HEK293 (cell line): ENCODE measurements at regions of chr6 and their contacts with region 1.

Region 1: GRCh38 chr6:137944793-137945498 is 77.9 kb downstream of the TNFAIP3 start:
- H3K4me3 ChIP-seq: no peak overlapping the region
- H3K27ac ChIP-seq: no peak overlapping the region
- H3K4me1 ChIP-seq: no peaks in the 10 kb centered on the region
- CTCF ChIP-seq: 0 out of 2 replicates have a peak, but pooled peaks have one; percentile 30

Region 2: DNA sequence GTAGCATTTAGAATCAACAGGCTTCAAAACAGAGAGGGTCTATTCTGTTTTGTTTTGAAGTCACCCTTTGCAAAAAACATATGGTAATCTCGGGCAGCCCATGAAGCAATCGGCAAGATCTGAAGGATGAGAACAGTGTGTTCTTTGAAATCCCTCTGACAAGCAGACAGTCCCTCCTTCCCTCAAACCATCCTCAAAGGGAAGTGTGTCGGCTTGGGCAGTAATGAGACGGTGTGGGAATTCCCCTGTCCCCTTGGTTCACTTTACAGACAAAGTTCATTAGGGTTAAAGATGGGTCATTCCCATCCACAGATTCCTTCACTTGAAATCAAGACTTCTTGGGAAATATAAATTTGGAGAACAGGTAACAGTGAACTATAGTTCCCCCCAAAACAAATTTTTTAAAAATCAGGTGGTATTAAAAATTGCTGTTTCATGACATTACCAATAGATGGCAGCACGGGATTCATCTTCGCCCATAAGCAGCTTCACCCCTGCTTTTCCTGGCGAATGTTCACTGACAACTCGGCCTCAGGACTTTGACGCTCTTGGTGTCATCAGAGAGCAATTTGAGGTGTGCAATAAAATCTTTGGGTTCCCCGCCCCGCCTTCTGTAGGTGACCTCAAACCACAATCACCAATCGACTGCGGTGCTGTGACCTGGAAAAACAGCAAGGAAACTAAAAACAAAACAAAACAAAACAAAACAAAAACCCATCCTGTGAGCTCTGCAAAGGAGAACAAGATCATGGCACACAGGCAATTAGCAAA is 237.2 kb before region 1 on chr6:
- CTCF ChIA-PET with region 1: interaction called, 33 read pairs
- POLR2A ChIA-PET with region 1: interaction called, 5 read pairs
- H3K4me3 ChIP-seq: no peak overlapping the region
- H3K27ac ChIP-seq: no peak overlapping the region
- H3K4me1 ChIP-seq: no peaks in the 10 kb centered on the region
- CTCF ChIP-seq: peak; percentile 66; the same call in 1 of the 2 replicates

Region 3: GRCh38 chr6:137866914-137867684 is 77.8 kb before region 1 on chr6 and contains the start of gene TNFAIP3:
- CTCF ChIA-PET with region 1: interaction called, 13 read pairs
- POLR2A ChIA-PET with region 1: no interaction called
- H3K4me3 ChIP-seq: peak within 1 kb of the TSS; percentile 67
- H3K27ac ChIP-seq: peak within 1 kb of the TSS; percentile 60; the same call in 1 of the 2 replicates
- H3K4me1 ChIP-seq: peaks cover 16% of the 10 kb centered on the region
- CTCF ChIP-seq: peak; percentile 68

Region 4: GRCh38 chr6:137892271-137892708 is 52.7 kb before region 1 on chr6:
- CTCF ChIA-PET with region 1: no interaction called
- POLR2A ChIA-PET with region 1: no interaction called
- H3K4me3 ChIP-seq: no peak overlapping the region
- H3K27ac ChIP-seq: no peak overlapping the region
- H3K4me1 ChIP-seq: no peaks in the 10 kb centered on the region
- CTCF ChIP-seq: no peak

Region 5: GRCh38 chr6:137933696-137934095 is 11.2 kb before region 1 on chr6:
- CTCF ChIA-PET with region 1: interaction called, 33 read pairs
- POLR2A ChIA-PET with region 1: no interaction called
- H3K4me3 ChIP-seq: no peak overlapping the region
- H3K27ac ChIP-seq: no peak overlapping the region
- H3K4me1 ChIP-seq: no peaks in the 10 kb centered on the region
- CTCF ChIP-seq: no peak

Region 6: GRCh38 chr6:137967689-137968454 is 22.9 kb after region 1 on chr6:
- CTCF ChIA-PET with region 1: interaction called, 16 read pairs
- POLR2A ChIA-PET with region 1: no interaction called
- H3K4me3 ChIP-seq: no peak overlapping the region
- H3K27ac ChIP-seq: no peak overlapping the region
- H3K4me1 ChIP-seq: no peaks in the 10 kb centered on the region
- CTCF ChIP-seq: no peak

Region 7: GRCh38 chr6:138001750-138002349 is 56.9 kb after region 1 on chr6:
- CTCF ChIA-PET with region 1: interaction called, 35 read pairs
- POLR2A ChIA-PET with region 1: no interaction called
- H3K4me3 ChIP-seq: no peak overlapping the region
- H3K27ac ChIP-seq: no peak overlapping the region
- H3K4me1 ChIP-seq: no peaks in the 10 kb centered on the region
- CTCF ChIP-seq: peak; percentile 45; the same call in 1 of the 2 replicates

Region 8: GRCh38 chr6:138161338-138162110 is 216.6 kb after region 1 on chr6 and contains the start of gene ARFGEF3:
- CTCF ChIA-PET with region 1: no interaction called
- POLR2A ChIA-PET with region 1: no interaction called
- H3K4me3 ChIP-seq: peak within 1 kb of the TSS; percentile 64
- H3K27ac ChIP-seq: peak within 1 kb of the TSS; percentile 80; the same call in 1 of the 2 replicates
- H3K4me1 ChIP-seq: 0 out of 2 replicates have a peak, but pooled peaks cover 2% of the 10 kb centered on the region
- CTCF ChIP-seq: no peak